ENCODE measurements at regions of chr7 and their contacts with region 1.

Region 1: GRCh38 chr7:2360796-2361195 is 6.2 kb downstream of the EIF3B start:
- DNase-seq: no peak
- ATAC-seq: no peak
- H3K4me3 Mint-ChIP-seq: no peak overlapping the region
- H3K27ac Mint-ChIP-seq: no peak overlapping the region
- H3K4me1 Mint-ChIP-seq: peaks cover 30% of the 10 kb centered on the region
- H3K27me3 Mint-ChIP-seq: no peaks in the 10 kb centered on the region
- CTCF ChIP-seq: no peak

Region 2: GRCh38 chr7:2376351-2377154 is 15.8 kb after region 1 on chr7:
- CTCF ChIA-PET with region 1: interaction called, 3 read pairs
- POLR2A ChIA-PET with region 1: interaction called, 10 read pairs
- intact Hi-C with region 1: no loop called
- DNase-seq: no peak
- ATAC-seq: no peak
- H3K4me3 Mint-ChIP-seq: no peak overlapping the region
- H3K27ac Mint-ChIP-seq: no peak overlapping the region
- H3K4me1 Mint-ChIP-seq: peaks cover 6% of the 10 kb centered on the region
- H3K27me3 Mint-ChIP-seq: no peaks in the 10 kb centered on the region
- CTCF ChIP-seq: no peak

Region 3: GRCh38 chr7:2440608-2441245 is 79.9 kb after region 1 on chr7:
- CTCF ChIA-PET with region 1: no interaction called
- POLR2A ChIA-PET with region 1: no interaction called
- intact Hi-C with region 1: no loop called
- DNase-seq: no peak
- ATAC-seq: no peak
- H3K4me3 Mint-ChIP-seq: no peak overlapping the region
- H3K27ac Mint-ChIP-seq: no peak overlapping the region
- H3K4me1 Mint-ChIP-seq: peaks cover 2% of the 10 kb centered on the region
- H3K27me3 Mint-ChIP-seq: no peaks in the 10 kb centered on the region
- CTCF ChIP-seq: no peak

Region 4: DNA sequence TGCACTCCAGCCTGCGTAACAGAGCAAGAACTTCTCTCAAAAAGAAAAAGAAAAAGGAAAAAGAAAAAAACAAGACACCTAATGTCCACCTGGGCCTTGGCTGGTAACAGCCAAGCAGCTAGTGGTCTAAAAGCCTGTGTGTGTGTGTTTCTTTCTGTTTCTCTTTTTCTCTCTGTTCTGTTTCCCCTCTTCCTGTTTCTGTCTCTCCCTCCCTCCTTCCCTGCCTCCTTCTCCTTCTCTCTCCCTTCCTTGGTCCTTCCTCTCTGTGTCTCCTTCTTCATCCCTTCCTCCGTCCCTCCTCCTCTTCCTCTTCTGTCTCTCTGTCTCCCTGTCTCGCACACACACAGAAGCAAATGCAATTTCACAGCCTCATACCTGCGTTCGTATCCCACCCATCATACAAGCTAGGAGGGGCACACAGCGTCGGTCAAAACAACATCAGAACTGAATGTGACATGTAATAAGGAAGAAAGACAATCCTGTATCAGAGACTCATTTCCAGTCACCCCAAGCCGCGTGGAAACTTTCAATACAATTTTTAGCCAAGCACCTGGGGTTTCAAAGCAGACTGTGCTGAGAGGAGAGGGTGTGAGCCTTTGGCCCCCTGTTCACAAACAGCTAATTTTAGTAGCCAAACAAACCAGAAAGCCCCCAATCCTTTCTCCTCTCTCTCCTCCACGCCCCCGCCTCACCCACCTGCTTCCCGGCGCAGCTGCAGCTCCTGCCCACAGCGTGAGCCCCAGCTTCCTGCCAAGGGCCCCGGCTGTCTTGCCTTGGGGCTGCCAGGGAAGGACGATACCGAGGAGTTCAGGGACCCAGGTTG is 533.5 kb after region 1 on chr7:
- CTCF ChIA-PET with region 1: no interaction called
- POLR2A ChIA-PET with region 1: no interaction called
- intact Hi-C with region 1: no loop called
- DNase-seq: peak; percentile 83
- ATAC-seq: peak; percentile 71
- H3K4me3 Mint-ChIP-seq: peak overlapping the region; percentile 73
- H3K27ac Mint-ChIP-seq: peak overlapping the region; percentile 95
- H3K4me1 Mint-ChIP-seq: peaks cover 20% of the 10 kb centered on the region
- H3K27me3 Mint-ChIP-seq: no peaks in the 10 kb centered on the region
- CTCF ChIP-seq: no peak

Measured in activated CD8-positive, alpha-beta T cell treated with anti-CD3 and anti-CD28 coated beads for 36 hours (primary cell).